H1 (cell line): ENCODE measurements at regions of chr1 and their contacts with region 1.

Region 1: DNA sequence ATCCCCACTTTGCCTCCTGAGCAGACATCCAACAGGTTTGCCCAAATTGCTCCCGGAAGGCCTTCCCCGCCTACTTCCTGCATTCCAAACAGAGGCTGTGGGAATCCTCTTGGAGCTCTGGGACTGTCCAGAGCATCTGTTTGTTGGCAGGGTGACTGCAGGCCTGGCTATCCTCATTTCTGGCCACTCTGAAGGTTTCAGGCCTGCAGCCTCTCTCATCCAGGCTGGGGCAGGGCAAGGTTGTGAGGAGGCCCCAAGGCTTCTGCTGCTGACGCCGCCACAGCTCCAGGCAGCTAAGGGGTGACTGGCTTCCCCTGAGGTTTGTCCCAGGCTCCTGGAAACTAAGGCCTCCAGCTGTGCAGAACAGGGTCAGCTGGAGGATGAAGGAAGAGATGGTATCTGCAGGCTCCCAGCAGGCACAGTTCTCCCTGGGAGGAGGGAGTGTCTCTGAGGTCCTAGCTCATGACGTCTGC is 11.3 kb downstream of the CDK18 start:
- DNase-seq: no peak
- H3K4me3 ChIP-seq: no peak overlapping the region
- H3K27ac ChIP-seq: no peak overlapping the region
- H3K4me1 ChIP-seq: peaks cover 8 to 31% (median 22%) of the 10 kb centered on the region in 4 experiments
- H3K27me3 ChIP-seq: no peaks in the 10 kb centered on the region
- CTCF ChIP-seq: no peak
- EP300 ChIP-seq: no peak
- POLR2A ChIP-seq: no peak
- RAD21 ChIP-seq: no peak

Region 2: DNA sequence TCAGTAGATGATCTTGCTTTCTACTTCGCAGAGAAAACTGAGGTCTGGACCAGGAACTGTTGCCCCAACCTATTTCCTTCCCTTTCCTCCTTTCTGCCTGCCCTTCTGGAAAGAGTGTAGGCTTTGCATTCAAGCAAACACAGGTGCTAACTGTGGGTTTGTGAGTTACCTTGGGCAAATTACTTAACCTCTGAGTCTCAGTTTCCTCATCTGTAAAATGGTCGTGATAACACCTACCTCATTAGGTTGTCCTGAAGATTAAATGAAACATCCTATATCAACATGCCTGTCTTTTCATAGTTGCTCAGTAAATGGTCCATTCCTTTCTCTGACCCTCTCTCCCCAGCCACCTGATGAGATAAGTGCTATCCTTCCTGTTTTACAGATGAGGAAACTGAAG is 50.4 kb before region 1 on chr1:
- CTCF ChIA-PET with region 1: no interaction called
- POLR2A ChIA-PET with region 1: no interaction called
- DNase-seq: no peak
- H3K4me3 ChIP-seq: no peak overlapping the region
- H3K27ac ChIP-seq: no peak overlapping the region
- H3K4me1 ChIP-seq: peaks cover 0 to 5% (median 1%) of the 10 kb centered on the region in 4 experiments; a peak in 5 of 7 replicates
- H3K27me3 ChIP-seq: no peaks in the 10 kb centered on the region; a peak in 1 of 7 replicates
- CTCF ChIP-seq: no peak
- EP300 ChIP-seq: no peak
- POLR2A ChIP-seq: no peak
- RAD21 ChIP-seq: no peak

Region 3: GRCh38 chr1:205493241-205494085 is 22.4 kb before region 1 on chr1:
- CTCF ChIA-PET with region 1: interaction called, 1,626 read pairs
- POLR2A ChIA-PET with region 1: interaction called, 14 read pairs
- DNase-seq: no peak
- H3K4me3 ChIP-seq: no peak overlapping the region
- H3K27ac ChIP-seq: no peak overlapping the region
- H3K4me1 ChIP-seq: peaks cover 10 to 23% (median 16%) of the 10 kb centered on the region in 4 experiments
- H3K27me3 ChIP-seq: no peaks in the 10 kb centered on the region
- CTCF ChIP-seq: no peak
- EP300 ChIP-seq: no peak
- POLR2A ChIP-seq: no peak
- RAD21 ChIP-seq: no peak

Region 4: GRCh38 chr1:205504311-205504984 is 11.4 kb before region 1 on chr1 and contains the start of gene CDK18:
- CTCF ChIA-PET with region 1: interaction called, 1,626 read pairs
- POLR2A ChIA-PET with region 1: interaction called, 17 read pairs
- DNase-seq: peak; percentile 69 to 85
- H3K4me3 ChIP-seq: peak within 1 kb of the TSS; percentile 44 to 88 (median 86)
- H3K27ac ChIP-seq: peak within 1 kb of the TSS; percentile 49; the same call in 1 of the 2 replicates
- H3K4me1 ChIP-seq: peaks cover 0 to 29% (median 16%) of the 10 kb centered on the region in 4 experiments; a peak in 6 of 7 replicates
- H3K27me3 ChIP-seq: no peaks in the 10 kb centered on the region
- CTCF ChIP-seq: no peak
- EP300 ChIP-seq: no peak; a peak in 1 of 3 replicates
- POLR2A ChIP-seq: peak in 1 of 2 experiments; percentile 66; a peak in 1 of 3 replicates
- RAD21 ChIP-seq: no peak
- total RNA-seq, gene CDK18: 40.9 and 44.0 TPM in 2 replicates